HCT116 (cell line): ENCODE measurements at regions of chr7 and their contacts with region 1.

Region 1: DNA sequence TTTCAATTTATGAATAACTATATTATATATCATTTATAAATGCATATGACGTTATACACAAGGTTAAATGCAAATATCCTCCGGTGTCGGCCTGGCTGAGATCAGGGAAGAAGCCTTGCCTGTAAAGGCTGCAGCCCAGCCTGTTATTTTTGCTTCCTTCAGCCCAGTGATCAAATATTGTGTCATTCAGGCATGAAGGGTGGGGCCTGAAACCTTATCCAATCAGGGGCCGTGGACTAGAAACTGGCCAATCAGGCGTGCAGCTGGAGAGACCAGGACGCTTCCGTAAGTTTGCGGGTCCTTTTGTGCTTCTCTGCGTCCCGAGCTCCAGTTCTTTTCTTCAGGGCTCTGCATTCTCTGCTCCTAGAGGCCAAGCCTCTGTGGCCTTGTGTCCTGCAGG is at the start of gene ZNF722:
- DNase-seq: no peak
- ATAC-seq: no peak
- H3K4me3 ChIP-seq: no peak within 1 kb of the TSS
- H3K27ac ChIP-seq: no peak within 1 kb of the TSS
- H3K4me1 ChIP-seq: no peaks in the 10 kb centered on the region
- H3K27me3 ChIP-seq: no peaks in the 10 kb centered on the region
- CTCF ChIP-seq: no peak
- POLR2A ChIP-seq: no peak
- RAD21 ChIP-seq: no peak
- total RNA-seq, gene ZNF722: not detected

Region 2: GRCh38 chr7:63968629-63969028 is 29.9 kb before region 1 on chr7:
- CTCF ChIA-PET with region 1: no interaction called
- POLR2A ChIA-PET with region 1: no interaction called
- RAD21 ChIA-PET with region 1: no interaction called
- intact Hi-C with region 1: loop called (anchors 5 kb)
- DNase-seq: no peak
- ATAC-seq: no peak
- H3K4me3 ChIP-seq: no peak overlapping the region
- H3K27ac ChIP-seq: no peak overlapping the region
- H3K4me1 ChIP-seq: no peaks in the 10 kb centered on the region
- H3K27me3 ChIP-seq: no peaks in the 10 kb centered on the region
- CTCF ChIP-seq: no peak
- POLR2A ChIP-seq: no peak
- RAD21 ChIP-seq: no peak